ENCODE measurements at regions of chr9 and their contacts with region 1.

Region 1: GRCh38 chr9:100352727-100353505 is at the start of gene TEX10:
- DNase-seq: peak; percentile 85 to 91 (median 89)
- H3K4me3 ChIP-seq: peak within 1 kb of the TSS; percentile 77 to 93 (median 88)
- H3K27ac ChIP-seq: peak within 1 kb of the TSS in 4 of 5 donors; percentile 38 to 82 (median 63)
- H3K4me1 ChIP-seq: peaks cover 8 to 15% of the 10 kb centered on the region in 2 donors
- H3K27me3 ChIP-seq: no peaks in the 10 kb centered on the region
- CTCF ChIP-seq: no peak
- POLR2A ChIP-seq: peak; percentile 58 to 64
- total RNA-seq, gene TEX10: 5.9 to 25.1 (median 11.1) TPM

Region 2: DNA sequence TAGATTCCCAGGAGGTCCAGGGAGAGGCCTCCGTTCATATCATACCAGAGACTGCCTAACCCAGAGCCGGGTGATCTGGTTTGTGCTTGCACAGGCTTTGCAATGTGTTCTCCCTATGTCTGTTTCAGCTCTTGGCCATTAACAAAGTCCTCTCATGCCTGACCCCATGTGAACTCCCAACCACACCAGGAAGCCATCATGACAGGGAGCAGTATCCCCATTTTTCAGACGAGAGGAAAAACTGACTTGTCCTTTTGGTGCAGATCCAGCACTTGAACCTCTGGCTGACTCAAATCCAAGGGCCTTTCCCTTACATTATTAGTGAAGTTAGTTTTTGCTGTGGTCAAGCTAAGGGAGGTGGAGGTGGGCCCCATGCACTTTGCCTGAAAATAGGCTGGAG is 58.6 kb before region 1 on chr9:
- intact Hi-C with region 1: no loop called
- DNase-seq: no peak
- H3K4me3 ChIP-seq: no peak overlapping the region
- H3K27ac ChIP-seq: no peak overlapping the region
- H3K4me1 ChIP-seq: no peaks in the 10 kb centered on the region
- H3K27me3 ChIP-seq: no peaks in the 10 kb centered on the region
- CTCF ChIP-seq: no peak
- POLR2A ChIP-seq: no peak

Region 3: GRCh38 chr9:100394816-100395215 is 41.9 kb after region 1 on chr9:
- intact Hi-C with region 1: no loop called
- DNase-seq: no peak
- H3K4me3 ChIP-seq: no peak overlapping the region
- H3K27ac ChIP-seq: no peak overlapping the region
- H3K4me1 ChIP-seq: no peaks in the 10 kb centered on the region
- H3K27me3 ChIP-seq: no peaks in the 10 kb centered on the region
- CTCF ChIP-seq: no peak
- POLR2A ChIP-seq: no peak

Region 4: DNA sequence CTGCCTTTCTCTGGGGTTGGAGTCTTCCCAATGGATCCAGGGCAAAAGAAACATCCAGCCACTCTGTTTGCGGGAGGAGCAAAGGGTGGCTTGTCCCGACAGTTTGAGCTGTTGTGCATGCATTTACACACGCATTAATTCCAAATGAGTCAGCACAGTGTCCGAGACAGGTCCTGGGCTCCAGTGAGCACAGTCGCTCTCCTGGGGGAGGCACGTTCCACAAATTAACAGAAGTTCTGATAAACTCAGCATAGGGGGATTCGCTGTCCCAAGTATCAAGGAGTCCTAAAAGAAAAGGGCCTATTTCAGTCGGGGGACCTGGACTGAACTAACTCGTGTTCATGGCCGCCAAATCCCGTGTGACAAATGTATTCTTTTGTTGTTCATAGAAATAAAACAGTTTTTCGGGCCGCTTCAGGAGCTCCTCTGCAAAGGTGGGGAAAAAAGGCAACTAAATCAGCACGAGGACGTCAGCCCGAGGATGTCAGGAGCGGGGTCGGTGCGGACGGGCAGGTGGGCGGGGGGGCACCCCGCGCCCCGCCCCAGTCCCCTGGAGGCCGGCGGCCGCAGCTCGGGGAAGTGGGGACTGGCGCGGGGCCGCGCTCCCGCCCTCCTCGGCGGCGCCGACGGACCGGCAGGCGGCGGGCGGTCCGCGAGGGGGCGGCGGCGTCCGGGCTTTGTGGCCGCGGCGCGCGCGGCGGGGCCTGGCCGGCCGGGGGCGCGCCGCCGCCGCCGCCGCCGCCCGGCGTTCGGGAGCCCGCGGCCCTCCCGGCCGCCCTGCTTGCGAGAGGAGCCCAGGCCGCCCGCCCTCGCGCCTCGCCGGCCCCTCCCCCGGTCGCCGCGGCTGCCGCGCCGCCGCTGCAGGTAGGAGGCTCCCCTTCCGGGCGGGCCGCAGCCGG is 73.9 kb after region 1 on chr9 and contains the start of gene MSANTD3:
- intact Hi-C with region 1: loop called (anchors 5 to 10 kb)
- DNase-seq: peak; percentile 47 to 72 (median 64)
- H3K4me3 ChIP-seq: peak within 1 kb of the TSS; percentile 28 to 95 (median 82)
- H3K27ac ChIP-seq: peak within 1 kb of the TSS; percentile 78 to 97 (median 89)
- H3K4me1 ChIP-seq: peaks cover 20 to 32% of the 10 kb centered on the region in 2 donors
- H3K27me3 ChIP-seq: no peaks in the 10 kb centered on the region
- CTCF ChIP-seq: peak in 4 of 6 experiments; percentile 21 to 48 (median 31)
- POLR2A ChIP-seq: peak in 1 of 2 donors; percentile 68
- total RNA-seq, gene MSANTD3: 10.8 to 37.9 (median 19.8) TPM

Measured in adrenal gland (tissue), 19 donors.